ENCODE measurements at regions of chr2 and their contacts with region 1.

Region 1: DNA sequence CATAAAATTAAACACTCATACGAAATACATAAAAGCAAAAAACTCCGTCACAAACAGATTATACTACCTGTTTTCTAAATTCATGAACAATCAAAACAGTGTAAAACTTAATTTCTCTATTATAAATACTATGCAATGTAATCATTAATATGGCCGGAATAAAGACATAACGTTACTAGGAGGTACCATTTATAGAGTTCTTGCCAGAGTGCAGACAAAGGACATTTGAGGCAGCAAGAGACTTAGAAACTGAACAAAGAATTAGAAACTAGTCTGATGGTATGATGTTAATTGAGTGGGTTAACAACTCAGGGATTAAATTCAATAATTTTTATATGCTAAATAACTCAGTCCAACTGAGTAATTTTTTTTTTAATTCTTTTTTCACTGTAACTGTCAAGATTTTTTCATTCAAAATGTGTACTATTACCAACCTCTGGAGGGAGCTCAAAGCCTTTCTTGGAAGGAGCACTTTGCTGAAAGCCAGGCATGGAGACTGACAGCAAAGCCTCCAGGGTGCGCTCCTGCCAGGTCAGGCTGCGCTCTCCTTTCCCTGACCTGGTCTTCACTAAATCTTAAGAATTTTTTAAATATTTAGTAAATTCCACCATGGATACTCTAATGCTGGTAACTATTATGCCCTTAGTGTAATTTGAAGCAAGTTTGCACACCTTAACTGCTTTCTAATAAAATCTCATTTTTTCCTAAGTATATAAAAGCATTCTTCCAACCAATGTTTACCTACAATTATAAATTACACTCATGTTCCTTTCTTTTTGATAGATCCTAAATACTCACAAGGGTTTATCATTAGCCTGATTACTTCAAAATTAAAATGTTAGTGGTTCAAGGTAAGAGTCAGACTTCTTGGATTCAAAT is 34.1 kb downstream of the WDR35 start:
- DNase-seq: peak; percentile 68
- ATAC-seq: peak; percentile 82
- H3K4me3 ChIP-seq: no peak overlapping the region
- H3K4me3 Mint-ChIP-seq: no peak overlapping the region
- H3K27ac ChIP-seq: no peak overlapping the region
- H3K27ac Mint-ChIP-seq: no peak overlapping the region
- H3K4me1 ChIP-seq: no peaks in the 10 kb centered on the region
- H3K4me1 Mint-ChIP-seq: no peaks in the 10 kb centered on the region
- H3K27me3 ChIP-seq: no peaks in the 10 kb centered on the region
- H3K27me3 Mint-ChIP-seq: no peaks in the 10 kb centered on the region
- CTCF ChIP-seq: peak; percentile 85

Region 2: GRCh38 chr2:20097879-20098714 is 142.3 kb after region 1 on chr2:
- CTCF ChIA-PET with region 1: interaction called, 28 read pairs
- POLR2A ChIA-PET with region 1: no interaction called
- intact Hi-C with region 1: no loop called
- DNase-seq: peak; percentile 83
- ATAC-seq: peak; percentile 94
- H3K4me3 ChIP-seq: no peak overlapping the region
- H3K4me3 Mint-ChIP-seq: no peak overlapping the region
- H3K27ac ChIP-seq: no peak overlapping the region
- H3K27ac Mint-ChIP-seq: no peak overlapping the region
- H3K4me1 ChIP-seq: no peaks in the 10 kb centered on the region
- H3K4me1 Mint-ChIP-seq: peaks cover 1% of the 10 kb centered on the region
- H3K27me3 ChIP-seq: peaks cover 0 to 3% (median 0%) of the 10 kb centered on the region in 4 experiments
- H3K27me3 Mint-ChIP-seq: peaks cover 34% of the 10 kb centered on the region
- CTCF ChIP-seq: peak; percentile 95

Region 3: DNA sequence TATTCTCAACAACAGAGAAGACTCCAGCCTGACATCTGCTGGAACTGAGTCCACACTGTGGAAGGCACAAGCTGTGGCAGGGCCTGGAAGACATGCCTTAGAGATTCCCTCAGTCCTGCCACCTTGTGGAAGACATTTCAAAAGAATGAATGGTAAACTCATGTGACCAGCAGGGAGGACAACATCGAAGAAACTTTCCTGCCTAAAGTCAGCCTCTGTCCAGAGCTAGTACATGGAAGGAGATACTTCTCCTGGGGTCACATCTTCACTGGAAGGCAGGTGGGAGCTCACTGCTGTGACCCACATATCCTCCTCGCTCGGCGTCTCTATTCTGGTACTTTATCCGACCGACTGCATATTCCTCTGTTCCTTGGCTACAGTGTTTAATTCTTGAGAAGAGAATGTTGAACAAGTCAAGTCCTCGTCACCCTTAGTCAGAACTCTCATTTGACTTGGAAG is 335.4 kb after region 1 on chr2:
- CTCF ChIA-PET with region 1: interaction called, 6 read pairs
- POLR2A ChIA-PET with region 1: no interaction called
- intact Hi-C with region 1: loop called (anchors 5 kb)
- DNase-seq: peak; percentile 36
- ATAC-seq: peak; percentile 28
- H3K4me3 ChIP-seq: no peak overlapping the region
- H3K4me3 Mint-ChIP-seq: no peak overlapping the region
- H3K27ac ChIP-seq: no peak overlapping the region
- H3K27ac Mint-ChIP-seq: no peak overlapping the region
- H3K4me1 ChIP-seq: no peaks in the 10 kb centered on the region
- H3K4me1 Mint-ChIP-seq: no peaks in the 10 kb centered on the region
- H3K27me3 ChIP-seq: no peaks in the 10 kb centered on the region
- H3K27me3 Mint-ChIP-seq: no peaks in the 10 kb centered on the region
- CTCF ChIP-seq: peak; percentile 35

Measured in B cell (primary cell).